ENCODE measurements at regions of chr3 and their contacts with region 1.

Region 1: GRCh38 chr3:98812851-98813374 is 49.8 kb downstream of the ST3GAL6 start:
- DNase-seq: peak in 2 of 4 donors; percentile 14 to 24
- ATAC-seq: peak; percentile 58
- H3K4me3 ChIP-seq: no peak overlapping the region
- H3K27ac ChIP-seq: no peak overlapping the region
- H3K4me1 ChIP-seq: no peaks in the 10 kb centered on the region
- H3K27me3 ChIP-seq: no peaks in the 10 kb centered on the region
- CTCF ChIP-seq: peak; percentile 11 to 80 (median 71)
- POLR2A ChIP-seq: no peak

Region 2: DNA sequence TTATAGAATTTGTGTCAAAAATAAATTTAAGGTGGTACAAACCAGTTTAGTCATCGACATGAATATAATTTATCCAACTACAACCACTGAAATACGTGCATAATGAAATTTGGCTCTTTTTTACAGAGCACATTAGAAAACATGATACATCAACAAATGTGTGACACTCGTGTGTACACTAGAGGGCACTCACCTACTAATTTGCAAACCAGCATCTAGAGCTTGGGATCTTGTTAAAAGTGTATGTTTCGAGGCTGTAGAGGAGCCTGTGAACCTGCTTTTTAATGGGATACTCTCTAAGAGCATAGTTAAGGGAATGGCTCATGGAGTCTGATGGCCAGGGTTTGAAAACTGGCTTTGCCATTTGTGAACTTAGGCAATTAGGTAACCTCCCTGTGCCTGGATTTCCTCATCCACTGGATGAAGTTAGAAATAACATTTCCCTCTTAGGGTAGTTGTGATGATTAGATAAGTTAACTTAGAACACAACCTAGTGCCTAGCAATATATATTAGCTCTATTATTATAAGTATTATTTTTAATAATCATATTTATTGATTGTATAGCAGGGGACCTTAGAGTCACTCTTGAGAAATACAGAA is 210.7 kb before region 1 on chr3:
- intact Hi-C with region 1: loop called (anchors 5 kb)
- DNase-seq: peak; percentile 29 to 70 (median 50)
- ATAC-seq: peak; percentile 74
- H3K4me3 ChIP-seq: no peak overlapping the region
- H3K27ac ChIP-seq: no peak overlapping the region
- H3K4me1 ChIP-seq: no peaks in the 10 kb centered on the region
- H3K27me3 ChIP-seq: no peaks in the 10 kb centered on the region
- CTCF ChIP-seq: peak; percentile 55 to 81 (median 67)
- POLR2A ChIP-seq: no peak

Region 3: GRCh38 chr3:98884675-98885371 is 71.9 kb after region 1 on chr3:
- intact Hi-C with region 1: no loop called
- DNase-seq: no peak
- ATAC-seq: no peak
- H3K4me3 ChIP-seq: no peak overlapping the region
- H3K27ac ChIP-seq: peak overlapping the region in 3 of 4 donors; percentile 15 to 26 (median 19)
- H3K4me1 ChIP-seq: peaks cover 15% of the 10 kb centered on the region
- H3K27me3 ChIP-seq: no peaks in the 10 kb centered on the region
- CTCF ChIP-seq: no peak
- POLR2A ChIP-seq: no peak